ENCODE measurements at regions of chr5 and their contacts with region 1.

Region 1: GRCh38 chr5:168765551-168766425 is 186.6 kb upstream of the PANK3 start:
- DNase-seq: no peak
- H3K4me3 ChIP-seq: no peak overlapping the region
- H3K27ac ChIP-seq: no peak overlapping the region
- H3K4me1 ChIP-seq: no peaks in the 10 kb centered on the region
- H3K27me3 ChIP-seq: peaks cover 92% of the 10 kb centered on the region
- CTCF ChIP-seq: no peak

Region 2: DNA sequence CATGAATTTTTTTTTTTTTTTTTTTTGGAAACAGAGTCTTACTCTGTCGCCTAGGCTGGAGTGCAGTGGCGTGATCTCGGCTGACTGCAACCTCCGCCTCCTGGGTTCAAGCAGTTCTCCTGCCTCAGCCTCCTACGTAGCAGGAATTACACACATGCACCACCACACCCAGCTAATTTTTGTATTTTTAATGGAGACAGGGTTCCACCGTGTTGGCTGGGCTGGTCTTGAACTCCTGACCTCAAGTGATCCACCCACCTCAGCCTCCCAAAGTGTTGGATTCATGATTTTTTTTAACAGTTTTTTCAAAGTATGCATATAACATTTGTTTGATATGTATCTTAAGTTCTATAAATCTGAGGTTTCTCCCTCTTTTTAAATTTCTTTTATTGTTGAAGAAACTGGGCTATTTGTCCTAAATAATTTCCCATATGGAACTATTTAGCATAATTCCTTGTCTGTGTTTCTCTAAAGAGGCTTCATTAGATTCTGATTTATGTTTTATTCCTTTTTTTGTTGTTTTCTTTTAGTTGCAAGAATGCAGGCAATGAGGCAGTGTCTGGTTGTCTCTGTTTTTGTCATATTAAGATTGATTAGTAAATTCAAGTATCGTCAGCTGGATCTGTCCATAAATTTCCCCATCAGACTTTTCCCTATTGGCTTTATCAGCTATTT is 263.1 kb before region 1 on chr5:
- CTCF ChIA-PET with region 1: no interaction called
- POLR2A ChIA-PET with region 1: no interaction called
- intact Hi-C with region 1: no loop called
- DNase-seq: no peak
- H3K4me3 ChIP-seq: no peak overlapping the region
- H3K27ac ChIP-seq: no peak overlapping the region
- H3K4me1 ChIP-seq: no peaks in the 10 kb centered on the region
- H3K27me3 ChIP-seq: no peaks in the 10 kb centered on the region
- CTCF ChIP-seq: no peak

Region 3: GRCh38 chr5:168624850-168625357 is 140.9 kb before region 1 on chr5:
- CTCF ChIA-PET with region 1: no interaction called
- POLR2A ChIA-PET with region 1: interaction called, 11 read pairs
- intact Hi-C with region 1: no loop called
- DNase-seq: peak in 1 of 2 experiments; percentile 41
- H3K4me3 ChIP-seq: no peak overlapping the region
- H3K27ac ChIP-seq: no peak overlapping the region
- H3K4me1 ChIP-seq: no peaks in the 10 kb centered on the region
- H3K27me3 ChIP-seq: no peaks in the 10 kb centered on the region
- CTCF ChIP-seq: no peak

Region 4: DNA sequence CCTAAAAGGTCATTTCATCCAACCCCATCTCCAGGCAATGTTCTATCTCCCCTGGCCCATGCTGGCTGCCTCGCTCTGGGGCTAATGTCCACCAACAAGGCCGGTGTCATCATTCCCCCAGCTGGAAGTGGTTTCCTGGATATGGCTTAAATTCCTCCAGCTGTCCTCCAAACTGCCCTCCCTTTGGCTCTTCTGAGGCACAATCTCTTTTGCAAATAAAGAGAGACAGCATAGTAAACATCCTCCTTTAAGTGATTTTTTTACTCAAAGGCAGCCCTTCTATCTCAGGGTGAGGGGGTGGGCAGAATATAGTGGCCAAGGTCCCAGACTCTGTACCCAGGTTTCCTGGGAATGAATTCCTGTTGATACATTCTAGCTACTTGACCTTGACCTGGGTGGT is 69.2 kb before region 1 on chr5:
- CTCF ChIA-PET with region 1: no interaction called
- POLR2A ChIA-PET with region 1: no interaction called
- intact Hi-C with region 1: no loop called
- DNase-seq: no peak
- H3K4me3 ChIP-seq: no peak overlapping the region
- H3K27ac ChIP-seq: no peak overlapping the region
- H3K4me1 ChIP-seq: no peaks in the 10 kb centered on the region
- H3K27me3 ChIP-seq: peaks cover 91% of the 10 kb centered on the region
- CTCF ChIP-seq: no peak

Region 5: DNA sequence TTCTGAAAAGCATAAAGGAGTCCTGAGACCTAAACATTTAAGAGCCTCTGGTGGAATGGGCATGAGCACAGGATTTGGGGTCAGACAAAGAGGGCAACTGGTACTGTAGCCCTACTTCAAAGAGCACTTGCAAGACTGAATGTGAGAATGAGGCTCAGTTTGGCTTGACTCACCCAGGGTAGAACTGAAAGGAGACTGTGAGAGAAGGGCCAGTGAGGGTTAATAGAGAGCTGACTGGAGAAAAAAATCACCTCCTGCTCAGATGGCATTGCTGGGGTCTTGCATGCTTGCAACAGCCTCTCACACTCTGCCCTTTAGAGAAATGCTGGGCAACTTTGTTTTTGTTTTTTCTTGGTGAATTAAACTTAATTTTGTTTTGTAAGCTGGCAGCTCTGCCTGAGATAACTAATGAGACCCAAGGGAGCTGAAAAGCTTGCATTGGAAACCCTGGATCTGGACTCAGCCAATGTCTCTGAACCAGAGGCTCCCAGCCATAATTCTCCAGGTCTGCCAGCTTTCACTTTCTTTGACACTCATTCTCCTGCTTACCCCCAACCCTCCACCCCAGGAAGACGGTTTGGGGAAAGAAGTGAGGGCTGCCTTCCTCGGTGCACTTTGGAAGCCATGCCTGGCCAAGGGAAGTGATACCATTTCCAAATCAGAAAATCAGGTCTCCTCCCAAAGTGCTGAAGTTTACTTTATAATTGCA is 25.5 kb before region 1 on chr5:
- CTCF ChIA-PET with region 1: no interaction called
- POLR2A ChIA-PET with region 1: interaction called, 14 read pairs
- intact Hi-C with region 1: no loop called
- DNase-seq: no peak
- H3K4me3 ChIP-seq: no peak overlapping the region
- H3K27ac ChIP-seq: no peak overlapping the region
- H3K4me1 ChIP-seq: no peaks in the 10 kb centered on the region
- H3K27me3 ChIP-seq: peaks cover 67% of the 10 kb centered on the region
- CTCF ChIP-seq: no peak

Region 6: GRCh38 chr5:169637085-169637548 is 871.3 kb after region 1 on chr5 and contains the start of gene DOCK2:
- CTCF ChIA-PET with region 1: no interaction called
- POLR2A ChIA-PET with region 1: no interaction called
- intact Hi-C with region 1: no loop called
- DNase-seq: no peak
- H3K4me3 ChIP-seq: no peak within 1 kb of the TSS
- H3K27ac ChIP-seq: no peak within 1 kb of the TSS
- H3K4me1 ChIP-seq: peaks cover 11% of the 10 kb centered on the region; the same call in 1 of the 2 replicates
- H3K27me3 ChIP-seq: no peaks in the 10 kb centered on the region
- CTCF ChIP-seq: no peak
- total RNA-seq, gene DOCK2: 0.18 and 0.41 TPM in 2 replicates